ENCODE measurements at regions of chr11 and their contacts with region 1.

Region 1: DNA sequence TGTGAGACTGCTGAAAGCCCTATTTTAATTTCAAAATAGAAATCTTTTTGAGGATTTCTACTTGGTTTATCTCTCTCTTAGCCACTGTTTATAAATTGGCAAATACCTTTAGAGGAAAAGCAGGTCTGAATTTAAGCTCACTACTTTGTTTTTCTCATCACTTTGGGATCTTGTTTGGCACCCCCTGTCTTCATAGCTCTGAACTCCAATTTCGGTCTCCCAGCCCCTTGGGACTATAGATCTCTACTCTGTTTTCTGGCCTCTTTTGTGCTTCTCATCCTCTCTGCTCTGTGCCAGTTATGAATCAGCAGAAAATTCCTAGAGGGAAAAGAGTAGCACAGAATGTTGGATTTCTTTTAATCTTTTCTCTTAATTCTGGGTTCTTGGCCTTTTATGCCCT is 118.3 kb downstream of the CYP2R1 start:
- DNase-seq: no peak
- H3K4me3 ChIP-seq: no peak overlapping the region
- H3K27ac ChIP-seq: no peak overlapping the region
- H3K4me1 ChIP-seq: no peaks in the 10 kb centered on the region
- H3K27me3 ChIP-seq: peaks cover 4% of the 10 kb centered on the region
- CTCF ChIP-seq: peak; percentile 19 to 24

Region 2: GRCh38 chr11:14537134-14537599 is 236.6 kb before region 1 on chr11:
- CTCF ChIA-PET with region 1: no interaction called
- dilution Hi-C with region 1: no loop called
- in situ Hi-C with region 1: no loop called
- intact Hi-C with region 1: loop called (anchors 5 kb)
- DNase-seq: peak; percentile 5
- H3K4me3 ChIP-seq: no peak overlapping the region
- H3K27ac ChIP-seq: no peak overlapping the region
- H3K4me1 ChIP-seq: no peaks in the 10 kb centered on the region
- H3K27me3 ChIP-seq: peaks cover 3% of the 10 kb centered on the region
- CTCF ChIP-seq: peak; percentile 75

Measured in mammary epithelial cell (primary cell).